Heart right ventricle (tissue), 16 donors: ENCODE measurements at regions of chr15 and their contacts with region 1.

Region 1: GRCh38 chr15:68328443-68328842 is 50.9 kb downstream of the FEM1B start:
- DNase-seq: no peak
- ATAC-seq: no peak
- H3K4me3 ChIP-seq: no peak overlapping the region
- H3K27ac ChIP-seq: no peak overlapping the region
- H3K4me1 ChIP-seq: peaks cover 0 to 14% (median 0%) of the 10 kb centered on the region in 9 donors
- H3K27me3 ChIP-seq: no peaks in the 10 kb centered on the region
- CTCF ChIP-seq: no peak

Region 2: GRCh38 chr15:68666120-68666811 is 337.8 kb after region 1 on chr15:
- intact Hi-C with region 1: no loop called
- DNase-seq: no peak
- ATAC-seq: no peak
- H3K4me3 ChIP-seq: no peak overlapping the region
- H3K27ac ChIP-seq: no peak overlapping the region
- H3K4me1 ChIP-seq: peaks cover 0 to 7% (median 0%) of the 10 kb centered on the region in 9 donors
- H3K27me3 ChIP-seq: no peaks in the 10 kb centered on the region
- CTCF ChIP-seq: no peak

Region 3: GRCh38 chr15:70036585-70037291 is 1708.3 kb after region 1 on chr15:
- intact Hi-C with region 1: loop called in 1 of 10 experiments (anchors 10 kb)
- DNase-seq: no peak
- ATAC-seq: no peak
- H3K4me3 ChIP-seq: no peak overlapping the region
- H3K27ac ChIP-seq: no peak overlapping the region
- H3K4me1 ChIP-seq: peaks cover 0 to 10% (median 5%) of the 10 kb centered on the region in 9 donors
- H3K27me3 ChIP-seq: peaks cover 0 to 28% (median 23%) of the 10 kb centered on the region in 7 donors
- CTCF ChIP-seq: no peak